Aorta (tissue), 5 donors: ENCODE measurements at regions of chr9 and their contacts with region 1.

Region 1: DNA sequence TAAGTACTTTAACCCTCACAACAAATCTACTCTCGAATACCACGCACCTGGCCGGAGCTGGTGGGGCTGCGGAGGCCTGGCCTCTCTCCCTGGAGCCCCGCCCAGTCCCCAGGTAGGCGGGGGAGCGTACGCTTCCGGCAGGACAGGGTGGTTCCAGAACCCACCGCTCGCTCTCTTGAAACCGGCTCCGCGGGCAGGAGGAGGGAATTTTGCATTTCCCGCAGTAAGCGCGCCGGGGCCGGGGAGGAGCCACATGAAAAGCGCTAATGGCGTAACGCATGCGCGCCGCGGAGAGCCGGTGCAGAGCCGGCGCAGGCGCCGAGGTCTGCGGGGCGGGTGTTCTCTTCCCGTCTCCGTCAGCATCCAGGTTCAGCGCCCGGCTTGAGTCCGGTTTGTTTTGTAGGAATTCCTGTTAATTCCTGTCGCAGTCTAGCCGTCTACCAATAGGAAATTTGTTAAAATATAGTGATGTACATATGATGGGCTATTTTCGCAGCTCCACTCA is 20.8 kb downstream of the CAVIN4 start:
- DNase-seq: peak; percentile 88 to 95
- ATAC-seq: peak; percentile 90
- H3K4me3 ChIP-seq: peak overlapping the region; percentile 14 to 55
- H3K27ac ChIP-seq: no peak overlapping the region
- H3K4me1 ChIP-seq: no peaks in the 10 kb centered on the region
- H3K27me3 ChIP-seq: no peaks in the 10 kb centered on the region

Region 2: GRCh38 chr9:100049551-100049950 is 549.1 kb before region 1 on chr9:
- intact Hi-C with region 1: loop called in 1 of 2 experiments (anchors 5 kb)
- DNase-seq: no peak
- ATAC-seq: no peak
- H3K4me3 ChIP-seq: no peak overlapping the region
- H3K27ac ChIP-seq: no peak overlapping the region
- H3K4me1 ChIP-seq: peaks cover 0 to 2% of the 10 kb centered on the region in 2 donors
- H3K27me3 ChIP-seq: no peaks in the 10 kb centered on the region

Region 3: GRCh38 chr9:100322954-100323536 is 275.6 kb before region 1 on chr9:
- intact Hi-C with region 1: loop called in 1 of 2 experiments (anchors 10 kb)
- DNase-seq: no peak
- ATAC-seq: no peak
- H3K4me3 ChIP-seq: no peak overlapping the region
- H3K27ac ChIP-seq: no peak overlapping the region
- H3K4me1 ChIP-seq: no peaks in the 10 kb centered on the region
- H3K27me3 ChIP-seq: no peaks in the 10 kb centered on the region

Region 4: DNA sequence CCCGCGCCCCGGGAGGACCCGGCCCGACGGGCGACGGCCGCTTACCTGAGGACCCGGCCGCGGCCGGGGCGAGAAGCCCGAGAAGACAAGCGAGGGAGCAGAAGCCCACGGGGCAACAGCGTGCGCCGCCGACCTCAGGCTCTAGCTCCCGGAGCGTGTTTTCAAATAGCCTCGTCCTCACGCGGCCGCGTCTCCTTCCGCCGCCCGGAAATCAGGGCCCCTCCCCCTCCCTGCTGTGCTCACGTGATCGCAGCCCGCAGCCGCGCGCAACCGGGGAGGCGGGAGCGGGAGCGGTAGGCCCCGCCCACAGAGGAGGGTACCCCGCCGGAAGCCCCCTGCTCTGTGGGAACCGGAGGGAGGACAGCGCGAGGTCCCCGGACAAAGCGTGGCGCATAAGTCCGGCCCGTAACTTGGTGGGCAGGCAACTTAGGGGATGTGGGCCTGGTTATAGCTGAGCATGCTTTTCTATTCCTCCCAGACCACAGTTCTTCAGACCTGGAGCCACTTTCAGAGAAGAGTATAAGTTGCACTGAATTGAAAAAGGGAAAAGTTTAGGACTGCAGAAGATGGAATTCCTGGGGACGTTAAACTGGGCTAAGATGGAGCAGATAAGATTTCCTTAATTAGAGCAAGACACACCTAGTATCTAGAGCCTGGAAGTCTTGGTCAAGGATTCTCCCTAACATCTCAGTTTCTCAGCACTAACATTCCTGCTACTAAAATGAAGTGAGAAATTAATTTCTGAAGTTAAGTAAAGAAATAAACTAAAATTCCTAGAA is 245.8 kb before region 1 on chr9 and contains the start of gene TEX10:
- intact Hi-C with region 1: loop called (anchors 5 to 10 kb)
- DNase-seq: peak; percentile 93 to 96
- ATAC-seq: peak; percentile 98
- H3K4me3 ChIP-seq: peak within 1 kb of the TSS; percentile 82 to 83
- H3K27ac ChIP-seq: peak within 1 kb of the TSS in 1 of 2 donors; percentile 6
- H3K4me1 ChIP-seq: peaks cover 2 to 5% of the 10 kb centered on the region in 2 donors
- H3K27me3 ChIP-seq: no peaks in the 10 kb centered on the region
- total RNA-seq, gene TEX10: 10.6 to 12.9 TPM

Region 5: DNA sequence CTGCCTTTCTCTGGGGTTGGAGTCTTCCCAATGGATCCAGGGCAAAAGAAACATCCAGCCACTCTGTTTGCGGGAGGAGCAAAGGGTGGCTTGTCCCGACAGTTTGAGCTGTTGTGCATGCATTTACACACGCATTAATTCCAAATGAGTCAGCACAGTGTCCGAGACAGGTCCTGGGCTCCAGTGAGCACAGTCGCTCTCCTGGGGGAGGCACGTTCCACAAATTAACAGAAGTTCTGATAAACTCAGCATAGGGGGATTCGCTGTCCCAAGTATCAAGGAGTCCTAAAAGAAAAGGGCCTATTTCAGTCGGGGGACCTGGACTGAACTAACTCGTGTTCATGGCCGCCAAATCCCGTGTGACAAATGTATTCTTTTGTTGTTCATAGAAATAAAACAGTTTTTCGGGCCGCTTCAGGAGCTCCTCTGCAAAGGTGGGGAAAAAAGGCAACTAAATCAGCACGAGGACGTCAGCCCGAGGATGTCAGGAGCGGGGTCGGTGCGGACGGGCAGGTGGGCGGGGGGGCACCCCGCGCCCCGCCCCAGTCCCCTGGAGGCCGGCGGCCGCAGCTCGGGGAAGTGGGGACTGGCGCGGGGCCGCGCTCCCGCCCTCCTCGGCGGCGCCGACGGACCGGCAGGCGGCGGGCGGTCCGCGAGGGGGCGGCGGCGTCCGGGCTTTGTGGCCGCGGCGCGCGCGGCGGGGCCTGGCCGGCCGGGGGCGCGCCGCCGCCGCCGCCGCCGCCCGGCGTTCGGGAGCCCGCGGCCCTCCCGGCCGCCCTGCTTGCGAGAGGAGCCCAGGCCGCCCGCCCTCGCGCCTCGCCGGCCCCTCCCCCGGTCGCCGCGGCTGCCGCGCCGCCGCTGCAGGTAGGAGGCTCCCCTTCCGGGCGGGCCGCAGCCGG is 171.9 kb before region 1 on chr9 and contains the start of gene MSANTD3:
- intact Hi-C with region 1: loop called (anchors 10 kb)
- DNase-seq: peak; percentile 66 to 86
- ATAC-seq: peak; percentile 86
- H3K4me3 ChIP-seq: peak within 1 kb of the TSS; percentile 76 to 98
- H3K27ac ChIP-seq: peak within 1 kb of the TSS; percentile 95 to 97
- H3K4me1 ChIP-seq: peaks cover 0 to 3% of the 10 kb centered on the region in 2 donors
- H3K27me3 ChIP-seq: no peaks in the 10 kb centered on the region
- total RNA-seq, gene MSANTD3: 26.6 to 31.0 TPM

Region 6: GRCh38 chr9:100437860-100438805 is 160.6 kb before region 1 on chr9:
- intact Hi-C with region 1: loop called in 1 of 2 experiments (anchors 10 kb)
- DNase-seq: peak; percentile 75 to 79
- ATAC-seq: peak; percentile 68
- H3K4me3 ChIP-seq: no peak overlapping the region
- H3K27ac ChIP-seq: no peak overlapping the region
- H3K4me1 ChIP-seq: peaks cover 0 to 1% of the 10 kb centered on the region in 2 donors
- H3K27me3 ChIP-seq: no peaks in the 10 kb centered on the region

Region 7: DNA sequence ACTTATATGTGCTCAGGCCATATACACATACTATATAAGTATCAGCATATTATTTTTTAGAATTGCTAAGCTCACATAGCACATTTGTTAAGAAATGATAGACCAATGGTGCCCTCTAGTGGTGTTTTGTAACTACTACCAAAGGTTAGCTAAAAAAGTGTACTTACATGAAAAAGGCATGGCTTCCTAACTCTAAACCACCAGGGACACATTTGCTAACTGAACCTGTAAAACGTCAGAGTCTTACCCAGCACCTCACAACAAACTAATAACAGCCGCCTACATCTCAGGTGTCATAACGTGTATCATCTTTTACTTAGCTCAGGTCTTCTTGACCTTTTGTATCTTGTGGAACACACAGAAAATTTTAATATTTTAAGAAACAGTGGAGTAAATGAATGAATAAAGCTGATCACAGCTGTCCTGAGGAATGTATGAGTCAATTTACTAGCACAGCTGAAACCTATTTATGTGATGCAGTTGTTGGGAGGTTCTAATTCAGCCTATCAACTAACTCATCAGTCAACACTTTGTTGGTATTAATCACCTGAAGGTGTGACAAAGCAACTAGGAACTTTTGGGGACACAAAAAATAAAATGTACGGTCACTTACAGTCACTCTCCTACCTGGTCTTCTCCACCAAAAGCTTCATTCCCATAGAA is 713.2 kb after region 1 on chr9:
- intact Hi-C with region 1: loop called (anchors 5 to 10 kb)
- DNase-seq: no peak
- ATAC-seq: peak; percentile 70
- H3K4me3 ChIP-seq: no peak overlapping the region
- H3K27ac ChIP-seq: no peak overlapping the region
- H3K4me1 ChIP-seq: no peaks in the 10 kb centered on the region
- H3K27me3 ChIP-seq: no peaks in the 10 kb centered on the region